Activated CD8-positive, alpha-beta T cell treated with anti-CD3 and anti-CD28 coated beads, Interleukin-2, amount 10 ng/mL, durations not matched to agents 7 days and 5 days (primary cell): ENCODE measurements at regions of chr16 and their contacts with region 1.

Region 1: GRCh38 chr16:3023669-3024478 is at the starts of genes HCFC1R1 and THOC6:
- DNase-seq: peak; percentile 98
- ATAC-seq: peak; percentile 80
- H3K4me3 Mint-ChIP-seq: peak within 1 kb of the TSS; percentile 85
- H3K27ac Mint-ChIP-seq: peak within 1 kb of the TSS; percentile 94
- H3K4me1 Mint-ChIP-seq: peaks cover 56% of the 10 kb centered on the region
- H3K27me3 Mint-ChIP-seq: peaks cover 3% of the 10 kb centered on the region
- total RNA-seq, gene HCFC1R1: 41.0 to 41.7 TPM
- total RNA-seq, gene THOC6: 57.4 to 57.9 TPM

Region 2: DNA sequence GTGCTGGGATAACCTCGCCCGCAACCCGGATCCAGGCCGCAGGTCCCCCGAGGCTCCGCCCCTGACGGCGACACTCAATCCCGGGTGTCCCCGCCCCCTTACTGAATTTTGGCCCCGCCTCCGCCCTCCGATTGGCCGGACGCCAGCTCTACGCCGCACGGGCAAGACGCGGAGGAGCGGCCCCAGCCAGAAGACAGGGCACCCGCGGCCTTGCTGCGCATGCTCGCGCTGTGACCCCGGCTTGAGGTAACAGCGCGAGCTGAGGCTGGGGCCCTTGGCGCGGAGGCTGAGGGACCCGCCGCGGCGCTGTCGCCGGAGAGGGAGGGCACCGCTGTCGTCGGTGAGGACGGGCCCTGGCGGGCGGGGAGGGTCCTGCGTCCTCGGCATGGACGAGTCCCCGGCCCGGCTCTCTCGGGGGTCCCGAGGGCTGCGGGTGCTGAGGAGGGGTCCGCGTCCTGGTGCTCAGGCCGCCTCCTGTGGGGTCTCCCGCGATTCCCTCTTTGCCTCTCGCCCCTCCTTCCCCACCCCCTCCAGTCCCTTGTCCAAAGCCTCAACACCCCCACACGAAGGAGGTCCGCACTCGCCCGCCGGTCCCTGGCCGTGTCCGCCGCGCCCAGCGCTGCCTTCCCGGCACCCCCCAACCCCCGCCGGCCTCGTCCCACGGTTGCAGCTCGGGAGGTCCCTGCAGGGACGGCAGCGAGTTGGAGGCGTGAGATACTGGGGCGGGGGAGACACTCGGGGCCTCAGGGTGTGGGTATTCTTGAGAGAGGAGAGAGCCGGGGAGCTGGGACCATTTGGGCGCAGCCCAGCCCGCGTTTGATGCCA is 140.6 kb before region 1 on chr16 and contains the start of gene FLYWCH2:
- CTCF ChIA-PET with region 1: no interaction called
- POLR2A ChIA-PET with region 1: no interaction called
- DNase-seq: peak; percentile 100
- ATAC-seq: peak; percentile 88
- H3K4me3 Mint-ChIP-seq: peak within 1 kb of the TSS; percentile 87
- H3K27ac Mint-ChIP-seq: peak within 1 kb of the TSS; percentile 97
- H3K4me1 Mint-ChIP-seq: peaks cover 14% of the 10 kb centered on the region
- H3K27me3 Mint-ChIP-seq: peaks cover 4% of the 10 kb centered on the region
- total RNA-seq, gene FLYWCH2: 22.5 to 22.8 TPM

Region 3: DNA sequence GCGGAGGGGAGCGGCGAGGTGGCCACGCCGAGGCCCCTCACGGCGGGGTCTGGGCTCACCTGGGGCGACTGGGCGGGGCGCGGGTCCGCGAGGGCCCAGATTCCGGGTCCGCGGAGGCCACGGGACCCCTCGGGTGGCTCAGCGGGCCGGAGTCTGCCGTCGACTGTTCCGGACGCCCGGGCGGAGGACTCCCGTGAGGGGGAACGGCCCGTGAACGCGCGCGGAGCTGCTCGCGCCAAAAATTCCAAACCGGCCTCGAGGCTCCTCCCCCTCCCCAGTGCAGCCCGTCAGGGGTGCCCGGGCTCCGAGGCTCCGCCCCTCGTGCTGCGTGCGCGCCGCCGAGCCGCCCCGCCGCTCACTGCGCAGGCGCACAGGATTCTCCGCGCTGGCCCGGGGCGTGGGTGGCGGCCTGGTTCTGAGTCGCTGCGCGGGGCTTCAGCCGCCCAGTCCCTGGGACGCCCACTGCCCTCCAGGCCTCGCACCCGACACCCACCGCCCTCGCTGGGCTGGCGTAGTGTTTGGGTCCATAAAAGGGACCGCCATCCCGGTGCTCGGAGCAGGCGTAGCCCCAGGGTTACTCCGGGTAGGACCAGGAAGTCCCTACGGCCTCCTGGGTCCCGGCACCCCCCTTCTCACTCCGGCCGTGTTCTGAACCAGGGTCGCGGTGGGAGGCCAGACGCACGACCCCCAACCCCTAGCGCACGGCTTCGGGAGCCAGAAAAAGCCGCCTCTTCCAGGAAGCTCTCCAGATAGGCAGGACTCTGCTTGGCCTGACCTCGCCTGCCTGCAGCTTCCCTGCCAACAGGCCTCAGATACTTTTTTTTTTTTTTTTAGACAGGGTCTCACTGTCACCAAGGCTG is 43.4 kb before region 1 on chr16 and contains the start of gene PKMYT1:
- CTCF ChIA-PET with region 1: interaction called, 11 read pairs
- POLR2A ChIA-PET with region 1: interaction called, 4 read pairs
- DNase-seq: peak; percentile 95
- ATAC-seq: peak; percentile 95
- H3K4me3 Mint-ChIP-seq: peak within 1 kb of the TSS; percentile 87
- H3K27ac Mint-ChIP-seq: peak within 1 kb of the TSS; percentile 88
- H3K4me1 Mint-ChIP-seq: peaks cover 45% of the 10 kb centered on the region
- H3K27me3 Mint-ChIP-seq: no peaks in the 10 kb centered on the region
- total RNA-seq, gene PKMYT1: 144 to 160 TPM

Region 4: GRCh38 chr16:3036235-3036725 is 12.4 kb after region 1 on chr16:
- CTCF ChIA-PET with region 1: interaction called, 270 read pairs
- POLR2A ChIA-PET with region 1: interaction called, 20 read pairs
- DNase-seq: no peak
- ATAC-seq: peak; percentile 17
- H3K4me3 Mint-ChIP-seq: no peak overlapping the region
- H3K27ac Mint-ChIP-seq: no peak overlapping the region
- H3K4me1 Mint-ChIP-seq: peaks cover 16% of the 10 kb centered on the region
- H3K27me3 Mint-ChIP-seq: peaks cover 66% of the 10 kb centered on the region

Region 5: DNA sequence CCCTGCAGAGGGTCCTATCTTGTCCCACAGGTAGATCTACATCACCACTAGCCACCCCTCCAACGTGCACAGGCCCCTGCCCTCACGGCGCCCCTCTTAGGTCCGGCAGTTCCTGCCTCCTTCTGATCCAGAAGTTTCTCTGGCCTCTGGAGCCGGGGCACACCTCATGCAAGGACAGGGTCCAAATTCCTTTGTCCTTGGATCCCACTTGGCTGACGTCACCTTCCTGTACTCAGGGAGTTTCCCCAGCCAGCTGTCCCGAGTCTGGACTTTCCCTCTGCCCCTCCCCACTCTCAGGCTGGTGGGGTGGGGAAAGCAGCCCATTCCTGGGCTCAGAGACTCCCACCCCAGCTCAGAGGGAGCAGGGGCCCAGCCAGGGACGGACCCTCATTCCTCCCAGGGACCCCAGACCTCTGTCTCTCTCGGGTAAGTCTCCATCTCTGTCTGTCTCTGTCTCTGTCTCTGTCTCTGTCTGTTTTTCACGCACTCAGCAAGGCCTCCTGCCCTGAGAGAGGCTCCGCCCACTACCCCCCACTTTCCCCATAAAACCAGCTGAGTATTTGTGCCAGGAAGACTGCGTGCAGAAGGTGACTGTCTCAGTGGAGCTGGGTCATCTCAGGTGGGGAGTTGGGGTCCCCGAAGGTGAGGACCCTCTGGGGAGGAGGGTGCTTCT is 41.3 kb after region 1 on chr16 and contains the start of gene IL32:
- CTCF ChIA-PET with region 1: interaction called, 41 read pairs
- POLR2A ChIA-PET with region 1: interaction called, 3 read pairs
- DNase-seq: peak; percentile 78
- ATAC-seq: peak; percentile 52
- H3K4me3 Mint-ChIP-seq: peak within 1 kb of the TSS; percentile 100
- H3K27ac Mint-ChIP-seq: peak within 1 kb of the TSS; percentile 99
- H3K4me1 Mint-ChIP-seq: peaks cover 74% of the 10 kb centered on the region
- H3K27me3 Mint-ChIP-seq: no peaks in the 10 kb centered on the region
- total RNA-seq, gene IL32: 1,836 to 1,884 TPM

Region 6: DNA sequence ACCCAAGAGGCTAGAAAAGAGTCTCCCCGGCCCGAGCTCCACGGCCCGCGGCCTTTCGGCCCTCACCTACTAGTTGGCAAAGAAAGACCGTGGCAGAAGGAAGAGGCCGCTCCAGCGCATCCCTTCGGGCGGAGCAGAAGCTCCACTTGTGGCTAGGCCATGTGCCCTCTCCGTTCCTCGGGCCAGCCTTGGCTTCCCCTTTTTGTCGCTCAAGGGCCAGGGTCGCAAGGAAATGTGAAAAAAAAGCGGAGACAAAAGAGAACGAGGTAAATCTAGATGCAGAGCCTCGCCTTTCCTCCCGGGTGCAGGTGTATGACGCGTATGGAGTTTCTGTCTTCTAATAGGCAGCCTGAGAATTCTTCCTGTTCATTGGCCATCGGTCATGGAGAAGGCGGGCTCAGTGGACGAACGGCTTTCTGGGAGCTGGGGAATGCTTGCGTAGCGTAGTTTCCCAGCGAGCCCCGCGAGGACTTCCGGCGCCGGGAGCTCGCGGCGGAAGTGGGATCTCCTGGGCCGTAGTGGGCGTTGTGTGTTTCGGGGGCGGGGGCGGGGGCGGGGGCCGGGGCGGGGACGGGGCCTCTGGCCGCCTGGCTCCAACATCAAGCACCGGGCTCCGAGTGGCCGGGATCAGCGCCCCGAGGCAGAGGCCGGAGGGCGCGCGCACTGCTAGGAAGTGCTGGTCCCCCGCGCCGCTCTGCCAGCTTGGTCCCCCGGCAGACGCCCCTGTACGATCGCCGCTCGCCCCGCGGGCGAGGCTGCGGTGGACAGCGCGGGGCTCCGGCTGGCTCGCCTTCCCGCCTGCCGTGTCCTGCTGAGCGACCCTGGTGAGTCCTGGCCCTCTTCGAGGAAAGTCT is 110.9 kb after region 1 on chr16 and contains the start of gene ZNF213:
- CTCF ChIA-PET with region 1: interaction called, 159 read pairs
- POLR2A ChIA-PET with region 1: no interaction called
- DNase-seq: peak; percentile 97
- ATAC-seq: peak; percentile 96
- H3K4me3 Mint-ChIP-seq: peak within 1 kb of the TSS; percentile 92
- H3K27ac Mint-ChIP-seq: peak within 1 kb of the TSS; percentile 96
- H3K4me1 Mint-ChIP-seq: peaks cover 38% of the 10 kb centered on the region
- H3K27me3 Mint-ChIP-seq: no peaks in the 10 kb centered on the region
- total RNA-seq, gene ZNF213: 10.8 to 12.1 TPM